ENCODE measurements at regions of chr2 and their contacts with region 1.

Region 1: DNA sequence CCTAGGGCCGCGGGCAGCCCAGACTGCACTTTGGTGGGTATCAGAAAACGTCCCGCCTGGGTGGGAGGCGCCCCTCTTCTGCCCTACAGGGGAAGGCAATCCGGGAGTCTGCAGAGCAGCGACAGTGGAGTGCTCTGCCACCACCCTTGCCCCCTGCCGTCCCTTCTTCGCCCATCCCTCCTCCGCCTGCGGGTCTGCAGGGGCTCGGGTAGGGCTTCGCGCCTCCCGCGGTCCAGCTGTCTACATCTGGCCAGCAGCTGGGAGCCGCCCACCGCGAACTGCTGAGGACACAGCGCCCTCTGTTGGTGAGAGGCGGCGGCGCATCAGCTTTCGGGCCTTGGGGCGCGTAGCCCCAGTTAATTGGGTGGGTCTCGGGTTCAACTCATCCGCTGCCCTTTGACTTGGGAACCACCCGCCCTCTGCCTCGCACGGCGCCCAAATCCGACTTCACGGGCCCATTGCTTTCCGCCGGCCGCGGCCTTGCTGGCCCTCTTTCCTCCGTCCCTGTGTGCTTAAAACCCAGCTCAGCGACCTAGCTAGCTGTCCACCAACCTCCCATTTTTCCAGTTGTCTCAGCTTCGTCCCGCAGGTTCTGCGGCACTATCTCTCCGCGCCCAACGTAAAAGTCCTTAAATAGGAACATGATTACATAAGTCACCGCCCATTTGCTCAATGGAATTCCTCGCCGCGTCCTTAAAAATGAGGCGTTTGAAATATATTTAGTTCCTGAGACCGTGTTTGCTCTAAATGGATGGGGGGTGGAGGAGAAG is 17.6 kb downstream of the WNT10A start:
- DNase-seq: peak; percentile 91
- ATAC-seq: peak; percentile 15
- H3K4me3 Mint-ChIP-seq: peak overlapping the region; percentile 49
- H3K27ac Mint-ChIP-seq: no peak overlapping the region
- H3K4me1 Mint-ChIP-seq: peaks cover 42% of the 10 kb centered on the region
- H3K27me3 Mint-ChIP-seq: peaks cover 30% of the 10 kb centered on the region

Region 2: GRCh38 chr2:218229239-218229638 is 669.1 kb before region 1 on chr2:
- CTCF ChIA-PET with region 1: no interaction called
- POLR2A ChIA-PET with region 1: no interaction called
- intact Hi-C with region 1: loop called in 1 of 2 experiments (anchors 5 kb)
- DNase-seq: peak; percentile 70
- ATAC-seq: peak; percentile 83
- H3K4me3 Mint-ChIP-seq: peak overlapping the region; percentile 45
- H3K27ac Mint-ChIP-seq: peak overlapping the region; percentile 95
- H3K4me1 Mint-ChIP-seq: peaks cover 77% of the 10 kb centered on the region
- H3K27me3 Mint-ChIP-seq: no peaks in the 10 kb centered on the region

Region 3: GRCh38 chr2:218659258-218659987 is 238.9 kb before region 1 on chr2 and contains the starts of genes BCS1L and ZNF142:
- CTCF ChIA-PET with region 1: no interaction called
- POLR2A ChIA-PET with region 1: no interaction called
- intact Hi-C with region 1: loop called (anchors 1 to 5 kb)
- DNase-seq: peak; percentile 98
- ATAC-seq: peak; percentile 95
- H3K4me3 Mint-ChIP-seq: peak within 1 kb of the TSS; percentile 88
- H3K27ac Mint-ChIP-seq: peak within 1 kb of the TSS; percentile 89
- H3K4me1 Mint-ChIP-seq: peaks cover 35% of the 10 kb centered on the region
- H3K27me3 Mint-ChIP-seq: no peaks in the 10 kb centered on the region
- total RNA-seq, gene BCS1L: 74.3 to 92.3 TPM
- total RNA-seq, gene ZNF142: 31.5 to 42.4 TPM

Region 4: GRCh38 chr2:218860950-218861381 is 37.3 kb before region 1 on chr2:
- CTCF ChIA-PET with region 1: interaction called, 29 read pairs
- POLR2A ChIA-PET with region 1: no interaction called
- intact Hi-C with region 1: no loop called
- DNase-seq: no peak
- ATAC-seq: no peak
- H3K4me3 Mint-ChIP-seq: no peak overlapping the region
- H3K27ac Mint-ChIP-seq: no peak overlapping the region
- H3K4me1 Mint-ChIP-seq: peaks cover 15% of the 10 kb centered on the region
- H3K27me3 Mint-ChIP-seq: peaks cover 60% of the 10 kb centered on the region

Region 5: GRCh38 chr2:218908721-218909619 is 10.7 kb after region 1 on chr2:
- CTCF ChIA-PET with region 1: interaction called, 54 read pairs
- POLR2A ChIA-PET with region 1: no interaction called
- intact Hi-C with region 1: loop called (anchors 1 kb)
- DNase-seq: peak; percentile 97
- ATAC-seq: peak; percentile 98
- H3K4me3 Mint-ChIP-seq: peak overlapping the region; percentile 85
- H3K27ac Mint-ChIP-seq: peak overlapping the region; percentile 83
- H3K4me1 Mint-ChIP-seq: peaks cover 13% of the 10 kb centered on the region
- H3K27me3 Mint-ChIP-seq: peaks cover 16% of the 10 kb centered on the region

Region 6: GRCh38 chr2:218944759-218945404 is 46.6 kb after region 1 on chr2:
- CTCF ChIA-PET with region 1: no interaction called
- POLR2A ChIA-PET with region 1: no interaction called
- intact Hi-C with region 1: no loop called
- DNase-seq: no peak
- ATAC-seq: no peak
- H3K4me3 Mint-ChIP-seq: no peak overlapping the region
- H3K27ac Mint-ChIP-seq: no peak overlapping the region
- H3K4me1 Mint-ChIP-seq: no peaks in the 10 kb centered on the region
- H3K27me3 Mint-ChIP-seq: peaks cover 35% of the 10 kb centered on the region

Region 7: DNA sequence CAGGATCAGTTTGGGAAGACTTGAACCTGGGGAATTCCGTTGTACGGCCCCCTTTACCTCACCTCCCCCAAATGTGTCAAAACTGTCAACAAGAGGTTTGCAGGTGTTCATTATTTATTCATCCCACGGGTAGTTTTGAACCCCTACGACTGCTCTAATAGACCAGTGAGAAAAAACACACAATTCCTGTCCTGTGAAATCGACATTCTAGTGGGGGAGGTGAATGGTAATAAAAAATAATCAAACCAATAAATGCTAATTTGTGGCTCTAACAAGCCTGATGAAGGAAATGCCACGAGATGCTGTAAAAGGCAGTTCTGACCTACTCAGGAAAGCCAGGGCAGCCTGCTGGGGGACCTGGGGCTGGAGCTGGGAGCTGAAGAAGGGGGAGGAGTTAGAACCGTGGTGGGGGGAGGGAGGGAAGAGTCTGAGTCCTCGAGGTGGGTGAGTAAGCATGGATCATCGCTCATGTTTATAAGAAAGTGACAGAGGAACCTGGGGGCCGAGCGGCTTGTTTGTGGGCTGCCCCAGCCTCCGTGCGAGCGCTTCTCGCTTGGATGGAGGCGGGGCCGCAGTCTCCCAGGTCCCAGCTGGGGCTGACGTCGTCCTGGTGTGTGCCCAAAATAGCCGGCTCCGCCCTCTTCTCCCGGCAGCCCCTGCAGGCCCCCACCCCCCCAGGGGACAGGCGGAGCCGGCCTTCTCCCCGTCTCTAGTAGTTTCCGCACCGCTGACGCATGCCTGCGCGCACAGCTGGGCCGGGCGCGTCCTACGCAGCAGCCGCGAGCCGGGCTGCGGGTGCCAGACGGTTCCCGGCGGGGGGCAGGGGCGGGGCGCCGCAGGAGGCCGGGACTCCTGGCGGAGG is 380.6 kb after region 1 on chr2 and contains the start of gene DNAJB2:
- CTCF ChIA-PET with region 1: interaction called, 3 read pairs
- POLR2A ChIA-PET with region 1: no interaction called
- intact Hi-C with region 1: loop called in 1 of 2 experiments (anchors 1 kb)
- DNase-seq: peak; percentile 100
- ATAC-seq: peak; percentile 86
- H3K4me3 Mint-ChIP-seq: peak within 1 kb of the TSS; percentile 96
- H3K27ac Mint-ChIP-seq: peak within 1 kb of the TSS; percentile 95
- H3K4me1 Mint-ChIP-seq: peaks cover 37% of the 10 kb centered on the region
- H3K27me3 Mint-ChIP-seq: no peaks in the 10 kb centered on the region
- total RNA-seq, gene DNAJB2: 51.8 to 62.8 TPM